HEK293 (cell line): ENCODE measurements at regions of chr18 and their contacts with region 1.

Region 1: DNA sequence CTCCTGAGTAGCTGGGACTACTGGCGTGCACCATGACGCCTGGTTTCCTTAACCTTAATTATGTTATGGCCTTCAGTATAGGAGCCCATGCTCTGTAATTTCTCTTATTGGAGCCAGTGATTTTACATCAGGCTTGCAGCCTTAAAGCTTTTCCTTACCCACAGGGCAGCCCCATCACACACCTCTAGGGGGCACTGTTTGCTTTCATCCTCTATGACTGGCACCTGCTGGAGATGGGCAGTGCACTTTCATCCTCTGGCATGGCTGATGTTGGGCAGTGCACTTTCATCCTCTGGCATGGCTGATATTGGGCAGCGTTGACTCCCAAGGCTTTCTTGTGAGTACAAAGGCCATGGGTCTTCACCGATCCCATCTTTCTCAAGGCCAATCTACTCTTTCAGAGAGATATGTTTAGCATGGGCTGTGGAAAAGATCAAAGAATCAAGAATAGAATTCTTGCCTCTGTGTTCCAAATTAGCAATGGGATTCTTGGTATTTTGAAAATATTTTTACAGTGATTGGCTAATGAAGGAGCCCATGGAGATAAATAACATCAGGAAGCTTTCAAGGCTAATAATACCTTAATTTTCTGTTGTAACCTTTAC is 80.7 kb upstream of the MEX3C start:
- H3K4me3 ChIP-seq: no peak overlapping the region
- H3K27ac ChIP-seq: no peak overlapping the region
- H3K4me1 ChIP-seq: peaks cover 7% of the 10 kb centered on the region; the same call in 1 of the 2 replicates
- CTCF ChIP-seq: 0 out of 2 replicates have a peak, but pooled peaks have one; percentile 20

Region 2: GRCh38 chr18:50917021-50917420 is 361.1 kb before region 1 on chr18:
- CTCF ChIA-PET with region 1: no interaction called
- POLR2A ChIA-PET with region 1: no interaction called
- H3K4me3 ChIP-seq: no peak overlapping the region
- H3K27ac ChIP-seq: no peak overlapping the region
- H3K4me1 ChIP-seq: peaks cover 13% of the 10 kb centered on the region; the same call in 1 of the 2 replicates
- CTCF ChIP-seq: no peak

Region 3: DNA sequence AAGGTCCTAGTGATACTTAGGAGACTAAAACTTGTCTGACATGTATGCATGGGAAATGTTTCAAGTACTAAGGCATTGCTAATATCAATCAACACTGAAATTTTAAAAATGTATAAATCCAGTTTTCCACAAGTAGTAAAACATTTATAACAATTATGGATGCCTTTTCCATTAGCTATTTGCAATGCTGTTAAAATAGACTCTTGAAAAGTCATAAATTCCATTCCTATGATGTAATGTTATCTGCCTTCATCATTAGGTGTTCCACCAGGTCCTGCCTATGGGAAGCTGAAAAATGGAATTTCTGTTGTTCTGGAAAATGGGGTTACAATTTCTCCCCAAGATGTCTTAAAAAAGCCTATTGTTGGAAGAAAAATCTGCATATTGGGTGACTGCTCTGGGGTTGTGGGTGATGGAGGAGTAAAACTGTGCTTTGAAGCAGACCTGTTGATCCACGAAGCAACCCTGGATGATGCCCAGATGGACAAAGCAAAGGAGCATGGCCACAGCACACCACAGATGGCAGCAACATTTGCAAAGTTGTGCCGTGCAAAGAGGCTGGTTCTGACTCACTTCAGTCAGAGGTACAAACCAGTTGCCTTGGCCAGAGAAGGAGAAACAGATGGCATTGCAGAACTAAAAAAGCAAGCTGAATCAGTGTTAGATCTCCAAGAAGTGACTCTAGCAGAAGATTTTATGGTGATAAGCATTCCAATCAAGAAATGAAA is 291.6 kb before region 1 on chr18:
- CTCF ChIA-PET with region 1: no interaction called
- POLR2A ChIA-PET with region 1: no interaction called
- H3K4me3 ChIP-seq: no peak overlapping the region
- H3K27ac ChIP-seq: no peak overlapping the region
- H3K4me1 ChIP-seq: no peaks in the 10 kb centered on the region
- CTCF ChIP-seq: no peak

Region 4: GRCh38 chr18:51110073-51110803 is 167.9 kb before region 1 on chr18:
- CTCF ChIA-PET with region 1: interaction called, 14 read pairs
- POLR2A ChIA-PET with region 1: no interaction called
- H3K4me3 ChIP-seq: no peak overlapping the region
- H3K27ac ChIP-seq: no peak overlapping the region
- H3K4me1 ChIP-seq: no peaks in the 10 kb centered on the region
- CTCF ChIP-seq: peak; percentile 94

Region 5: GRCh38 chr18:51241226-51241625 is 36.9 kb before region 1 on chr18:
- CTCF ChIA-PET with region 1: interaction called, 10 read pairs
- POLR2A ChIA-PET with region 1: interaction called, 3 read pairs
- H3K4me3 ChIP-seq: no peak overlapping the region
- H3K27ac ChIP-seq: no peak overlapping the region
- H3K4me1 ChIP-seq: no peaks in the 10 kb centered on the region; the same call in 1 of the 2 replicates
- CTCF ChIP-seq: no peak

Region 6: DNA sequence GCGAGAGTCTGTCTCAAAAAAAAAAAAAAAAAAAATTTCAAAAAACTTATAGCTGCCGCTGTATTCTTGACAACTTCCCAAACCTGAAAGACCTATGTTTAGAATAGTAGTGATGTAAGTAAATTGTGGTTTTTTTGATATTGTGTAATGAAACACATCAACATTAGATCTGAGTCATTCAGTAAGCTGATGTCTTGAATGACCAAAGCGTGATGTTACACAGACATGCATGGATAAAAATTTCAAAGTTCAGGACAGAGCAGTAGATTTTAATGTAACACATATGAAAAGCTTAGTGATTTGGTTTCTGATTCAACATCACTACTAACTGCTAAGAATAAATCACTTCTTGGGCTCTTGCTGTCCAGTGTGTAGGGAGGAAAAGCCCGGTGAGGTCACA is 11.4 kb before region 1 on chr18:
- CTCF ChIA-PET with region 1: interaction called, 20 read pairs
- POLR2A ChIA-PET with region 1: no interaction called
- H3K4me3 ChIP-seq: no peak overlapping the region
- H3K27ac ChIP-seq: no peak overlapping the region
- H3K4me1 ChIP-seq: no peaks in the 10 kb centered on the region
- CTCF ChIP-seq: no peak

Region 7: DNA sequence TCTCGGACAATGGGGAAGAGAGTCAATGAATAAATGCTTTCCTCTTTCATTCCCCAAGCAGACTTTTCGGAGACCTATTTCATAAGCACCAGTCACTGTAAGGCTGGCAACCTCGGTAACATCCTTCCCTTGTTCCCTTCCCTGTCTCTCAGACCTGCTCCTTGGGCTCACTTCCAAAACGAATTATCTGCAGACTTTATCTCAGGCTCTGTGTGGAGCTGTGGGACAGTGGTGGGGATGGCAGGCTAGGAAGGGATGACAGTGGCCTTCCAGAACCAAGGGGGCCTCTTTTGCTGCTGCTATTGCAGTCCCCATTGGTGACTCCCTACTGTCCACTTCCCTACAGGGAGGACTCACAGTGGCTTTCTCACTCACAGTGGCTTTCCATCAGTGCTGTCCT is 105.0 kb after region 1 on chr18:
- CTCF ChIA-PET with region 1: interaction called, 21 read pairs
- POLR2A ChIA-PET with region 1: no interaction called
- H3K4me3 ChIP-seq: no peak overlapping the region
- H3K27ac ChIP-seq: no peak overlapping the region
- H3K4me1 ChIP-seq: no peaks in the 10 kb centered on the region
- CTCF ChIP-seq: no peak